Endothelial cell of umbilical vein (primary cell): ENCODE measurements at regions of chr4 and their contacts with region 1.

Region 1: GRCh38 chr4:185708348-185708747 is 103.6 kb downstream of the SORBS2 start:
- DNase-seq: peak; percentile 82
- H3K4me3 ChIP-seq: no peak overlapping the region
- H3K27ac ChIP-seq: peak overlapping the region; percentile 83
- H3K4me1 ChIP-seq: peaks cover 50% of the 10 kb centered on the region
- H3K27me3 ChIP-seq: no peaks in the 10 kb centered on the region
- CTCF ChIP-seq: no peak
- POLR2A ChIP-seq: no peak

Region 2: GRCh38 chr4:185457136-185457535 is 251.2 kb before region 1 on chr4:
- CTCF ChIA-PET with region 1: no interaction called
- POLR2A ChIA-PET with region 1: interaction called, 16 read pairs
- dilution Hi-C with region 1: no loop called
- intact Hi-C with region 1: no loop called
- DNase-seq: no peak
- H3K4me3 ChIP-seq: no peak overlapping the region
- H3K27ac ChIP-seq: no peak overlapping the region
- H3K4me1 ChIP-seq: no peaks in the 10 kb centered on the region
- H3K27me3 ChIP-seq: no peaks in the 10 kb centered on the region
- CTCF ChIP-seq: no peak
- POLR2A ChIP-seq: no peak

Region 3: DNA sequence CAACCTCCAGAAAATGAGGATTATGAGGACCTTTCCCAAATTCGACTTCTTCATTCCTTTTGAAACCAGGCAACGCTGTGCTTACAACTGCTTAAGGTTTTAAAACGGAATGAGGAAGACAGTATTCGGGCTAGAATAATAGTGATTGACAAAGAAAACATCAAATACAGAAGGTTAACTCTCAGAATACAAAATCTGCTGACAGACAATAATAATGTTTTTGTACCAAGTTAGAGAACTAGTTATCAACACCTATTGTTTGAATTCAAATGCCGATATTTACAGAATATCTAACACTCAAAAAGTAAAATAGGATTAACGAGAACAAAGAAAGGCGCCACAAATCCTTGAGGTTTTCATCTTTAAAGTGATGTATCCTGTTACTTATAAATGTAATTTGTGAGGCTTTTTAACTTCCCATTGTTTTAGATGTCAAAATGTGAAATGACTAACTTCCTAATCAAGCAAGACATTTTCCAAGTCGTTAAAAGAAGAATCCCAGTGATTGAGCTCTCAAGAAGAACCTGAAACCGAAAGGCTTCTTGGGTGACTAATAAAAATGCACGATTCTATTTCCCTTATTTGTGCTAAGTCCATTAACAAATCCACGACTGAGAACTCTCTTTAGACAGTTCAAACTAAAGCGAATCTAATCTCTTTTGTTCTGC is 14.7 kb before region 1 on chr4:
- CTCF ChIA-PET with region 1: no interaction called
- POLR2A ChIA-PET with region 1: no interaction called
- dilution Hi-C with region 1: no loop called
- intact Hi-C with region 1: loop called (anchors 1 kb)
- DNase-seq: peak; percentile 90
- H3K4me3 ChIP-seq: peak overlapping the region; percentile 1 to 46 (median 9)
- H3K27ac ChIP-seq: peak overlapping the region; percentile 84
- H3K4me1 ChIP-seq: peaks cover 19% of the 10 kb centered on the region
- H3K27me3 ChIP-seq: no peaks in the 10 kb centered on the region
- CTCF ChIP-seq: no peak
- POLR2A ChIP-seq: peak; percentile 22

Region 4: GRCh38 chr4:185721933-185722316 is 13.6 kb after region 1 on chr4:
- CTCF ChIA-PET with region 1: interaction called, 4 read pairs
- POLR2A ChIA-PET with region 1: no interaction called
- dilution Hi-C with region 1: no loop called
- intact Hi-C with region 1: loop called (anchors 1 kb)
- DNase-seq: no peak
- H3K4me3 ChIP-seq: no peak overlapping the region
- H3K27ac ChIP-seq: no peak overlapping the region
- H3K4me1 ChIP-seq: peaks cover 20% of the 10 kb centered on the region
- H3K27me3 ChIP-seq: no peaks in the 10 kb centered on the region
- CTCF ChIP-seq: no peak
- POLR2A ChIP-seq: no peak